MCF 10A (cell line): ENCODE measurements at regions of chr14 and their contacts with region 1.

Region 1: GRCh38 chr14:25537846-25538455 is 488.0 kb upstream of the STXBP6 start:
- DNase-seq: no peak
- H3K4me3 Mint-ChIP-seq: no peak overlapping the region
- H3K27ac Mint-ChIP-seq: no peak overlapping the region
- H3K4me1 Mint-ChIP-seq: no peaks in the 10 kb centered on the region
- H3K27me3 Mint-ChIP-seq: no peaks in the 10 kb centered on the region
- CTCF ChIP-seq: no peak

Region 2: DNA sequence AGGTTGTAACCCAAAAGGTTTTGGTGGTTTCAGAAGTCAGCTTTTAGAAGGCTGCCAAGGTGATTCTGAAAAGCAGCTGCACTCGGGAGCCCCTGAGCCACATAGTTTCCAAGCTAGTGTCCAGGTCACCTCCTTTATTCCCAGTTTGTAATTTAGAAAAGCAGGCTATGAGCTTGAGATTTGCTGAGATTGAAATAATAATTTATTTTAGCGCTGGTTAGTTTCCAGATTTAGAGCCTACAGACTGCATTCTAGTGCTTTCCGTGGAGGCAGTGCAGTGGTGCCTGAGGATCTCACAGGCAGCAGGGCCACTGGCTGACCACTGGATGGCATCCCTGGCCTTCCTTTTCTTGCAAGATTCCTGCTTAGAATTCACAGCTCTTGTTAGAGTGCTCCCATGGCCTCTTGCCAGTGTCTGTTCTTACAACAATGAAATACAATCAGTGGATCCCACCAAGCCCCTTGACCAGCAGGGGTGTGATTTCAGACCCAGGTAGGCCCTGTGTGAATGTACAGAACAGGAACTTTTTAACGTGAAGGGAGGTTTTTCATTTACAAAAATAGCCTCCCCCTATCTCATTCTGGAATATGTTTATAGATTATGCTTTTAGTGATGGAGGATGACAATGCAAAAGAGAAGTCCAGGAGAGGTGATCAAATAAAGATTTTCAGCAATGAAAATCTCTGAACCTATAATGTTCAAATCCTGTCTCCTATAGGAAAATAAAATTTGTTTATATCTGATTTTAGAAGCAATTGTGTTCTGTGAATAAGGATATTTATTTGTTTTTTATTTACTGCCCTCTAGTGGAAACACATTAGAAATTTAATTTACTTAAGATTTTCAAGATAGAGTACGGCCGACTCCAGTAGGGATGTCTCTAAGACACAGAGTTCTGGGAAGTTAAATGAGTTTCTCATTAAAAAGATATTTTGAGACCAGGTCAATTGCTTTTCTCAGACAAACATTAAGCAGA is 125.9 kb before region 1 on chr14:
- CTCF ChIA-PET with region 1: interaction called, 13 read pairs
- POLR2A ChIA-PET with region 1: no interaction called
- intact Hi-C with region 1: no loop called
- DNase-seq: no peak
- H3K4me3 Mint-ChIP-seq: no peak overlapping the region
- H3K27ac Mint-ChIP-seq: no peak overlapping the region
- H3K4me1 Mint-ChIP-seq: no peaks in the 10 kb centered on the region
- H3K27me3 Mint-ChIP-seq: peaks cover 10% of the 10 kb centered on the region
- CTCF ChIP-seq: peak; percentile 16

Region 3: GRCh38 chr14:25431211-25432048 is 106.5 kb before region 1 on chr14:
- CTCF ChIA-PET with region 1: interaction called, 47 read pairs
- POLR2A ChIA-PET with region 1: interaction called, 4 read pairs
- intact Hi-C with region 1: no loop called
- DNase-seq: no peak
- H3K4me3 Mint-ChIP-seq: no peak overlapping the region
- H3K27ac Mint-ChIP-seq: no peak overlapping the region
- H3K4me1 Mint-ChIP-seq: no peaks in the 10 kb centered on the region
- H3K27me3 Mint-ChIP-seq: no peaks in the 10 kb centered on the region
- CTCF ChIP-seq: no peak

Region 4: GRCh38 chr14:25522116-25522515 is 15.8 kb before region 1 on chr14:
- CTCF ChIA-PET with region 1: interaction called, 18 read pairs
- POLR2A ChIA-PET with region 1: no interaction called
- intact Hi-C with region 1: no loop called
- DNase-seq: no peak
- H3K4me3 Mint-ChIP-seq: no peak overlapping the region
- H3K27ac Mint-ChIP-seq: no peak overlapping the region
- H3K4me1 Mint-ChIP-seq: no peaks in the 10 kb centered on the region
- H3K27me3 Mint-ChIP-seq: no peaks in the 10 kb centered on the region
- CTCF ChIP-seq: no peak